Upper lobe of right lung (tissue), 1 donor: ENCODE measurements at regions of chr10 and their contacts with region 1.

Region 1: DNA sequence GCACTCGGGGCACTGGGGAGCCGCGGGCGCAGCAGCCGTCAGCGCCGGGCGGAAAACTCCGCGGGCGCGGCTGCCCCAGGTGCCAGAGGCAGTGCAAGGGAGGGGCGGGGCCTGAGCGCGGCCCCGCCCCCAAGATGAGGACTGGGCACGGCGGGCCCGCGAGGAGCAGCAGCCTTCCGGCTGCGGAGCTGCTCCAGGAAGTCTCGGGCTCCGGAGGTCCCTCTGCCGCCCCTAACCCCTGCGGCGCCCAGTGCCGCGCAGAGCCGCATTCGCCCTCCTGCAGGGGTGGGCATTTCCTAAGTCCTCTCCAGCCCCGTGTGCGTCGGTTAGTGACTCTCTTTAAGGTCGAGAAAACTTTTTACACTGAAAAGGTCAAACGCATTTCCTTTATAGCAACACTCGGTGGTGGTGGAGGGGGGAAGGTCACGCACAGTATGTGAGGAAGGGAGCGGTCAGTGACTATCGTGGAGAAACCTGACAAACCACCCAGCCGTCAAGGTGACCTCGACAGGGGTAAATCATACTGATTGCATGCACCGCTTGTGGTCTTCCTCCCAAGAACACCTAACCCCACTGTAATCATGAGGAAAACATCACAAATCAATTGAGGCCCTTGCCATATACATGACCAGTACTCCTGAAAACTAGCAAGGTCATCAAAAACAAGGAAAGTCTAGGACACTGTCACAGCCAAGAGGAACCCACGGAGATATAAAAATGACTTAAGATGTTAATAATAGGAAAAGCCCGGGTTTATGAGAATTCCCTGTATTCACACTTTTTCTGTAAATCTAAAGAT is at the start of gene ANXA11:
- DNase-seq: peak; percentile 94
- ATAC-seq: peak; percentile 85
- H3K4me3 ChIP-seq: peak within 1 kb of the TSS; percentile 80
- H3K27ac ChIP-seq: peak within 1 kb of the TSS; percentile 96
- H3K4me1 ChIP-seq: peaks cover 55% of the 10 kb centered on the region
- H3K27me3 ChIP-seq: no peaks in the 10 kb centered on the region
- CTCF ChIP-seq: no peak
- total RNA-seq, gene ANXA11: 287 TPM

Region 2: DNA sequence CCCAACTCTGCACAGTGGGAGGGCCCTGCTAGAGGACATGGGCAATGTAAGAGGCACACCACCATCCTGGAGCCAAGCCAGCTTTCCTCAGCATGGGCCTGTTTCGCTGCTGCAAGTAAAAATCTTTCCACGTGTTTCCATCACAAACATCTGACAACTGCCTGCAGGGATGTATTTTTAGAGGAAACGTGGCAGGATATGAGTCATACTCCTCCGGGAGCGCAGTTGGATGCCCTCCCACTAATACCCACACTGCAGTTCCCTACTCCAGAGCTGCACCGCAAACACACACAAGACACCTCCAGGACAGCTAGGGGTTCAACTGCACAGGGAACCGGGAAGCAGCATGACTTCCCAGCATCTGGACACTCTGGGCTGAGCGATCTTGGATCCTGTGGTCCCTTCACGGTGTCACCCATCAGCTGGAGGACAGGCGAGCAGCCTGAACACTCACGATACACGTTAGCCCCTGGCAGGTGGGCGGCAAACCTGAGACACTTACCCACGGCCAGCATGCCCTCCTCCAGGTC is 47.0 kb before region 1 on chr10:
- intact Hi-C with region 1: loop called (anchors 10 kb)
- DNase-seq: no peak
- ATAC-seq: peak; percentile 82
- H3K4me3 ChIP-seq: no peak overlapping the region
- H3K27ac ChIP-seq: peak overlapping the region; percentile 67
- H3K4me1 ChIP-seq: peaks cover 19% of the 10 kb centered on the region
- H3K27me3 ChIP-seq: no peaks in the 10 kb centered on the region
- CTCF ChIP-seq: no peak

Region 3: GRCh38 chr10:80252296-80252925 is 46.7 kb after region 1 on chr10:
- intact Hi-C with region 1: no loop called
- DNase-seq: no peak
- ATAC-seq: peak; percentile 4
- H3K4me3 ChIP-seq: no peak overlapping the region
- H3K27ac ChIP-seq: no peak overlapping the region
- H3K4me1 ChIP-seq: peaks cover 6% of the 10 kb centered on the region
- H3K27me3 ChIP-seq: no peaks in the 10 kb centered on the region
- CTCF ChIP-seq: no peak